CD4-positive, alpha-beta memory T cell (primary cell): ENCODE measurements at regions of chr19 and their contacts with region 1.

Region 1: GRCh38 chr19:14136509-14137281 is at the start of gene ASF1B:
- DNase-seq: peak; percentile 98 to 99 (median 99)
- H3K4me3 ChIP-seq: peak within 1 kb of the TSS; percentile 73 to 77
- H3K4me3 Mint-ChIP-seq: peak within 1 kb of the TSS; percentile 92 to 100 (median 95)
- H3K27ac ChIP-seq: peak within 1 kb of the TSS; percentile 93
- H3K27ac Mint-ChIP-seq: peak within 1 kb of the TSS; percentile 85 to 98 (median 96)
- H3K4me1 ChIP-seq: peaks cover 18% of the 10 kb centered on the region
- H3K4me1 Mint-ChIP-seq: peaks cover 13 to 33% (median 21%) of the 10 kb centered on the region in 4 donors
- H3K27me3 ChIP-seq: no peaks in the 10 kb centered on the region
- H3K27me3 Mint-ChIP-seq: no peaks in the 10 kb centered on the region
- total RNA-seq, gene ASF1B: 2.3 to 3.0 TPM

Region 2: DNA sequence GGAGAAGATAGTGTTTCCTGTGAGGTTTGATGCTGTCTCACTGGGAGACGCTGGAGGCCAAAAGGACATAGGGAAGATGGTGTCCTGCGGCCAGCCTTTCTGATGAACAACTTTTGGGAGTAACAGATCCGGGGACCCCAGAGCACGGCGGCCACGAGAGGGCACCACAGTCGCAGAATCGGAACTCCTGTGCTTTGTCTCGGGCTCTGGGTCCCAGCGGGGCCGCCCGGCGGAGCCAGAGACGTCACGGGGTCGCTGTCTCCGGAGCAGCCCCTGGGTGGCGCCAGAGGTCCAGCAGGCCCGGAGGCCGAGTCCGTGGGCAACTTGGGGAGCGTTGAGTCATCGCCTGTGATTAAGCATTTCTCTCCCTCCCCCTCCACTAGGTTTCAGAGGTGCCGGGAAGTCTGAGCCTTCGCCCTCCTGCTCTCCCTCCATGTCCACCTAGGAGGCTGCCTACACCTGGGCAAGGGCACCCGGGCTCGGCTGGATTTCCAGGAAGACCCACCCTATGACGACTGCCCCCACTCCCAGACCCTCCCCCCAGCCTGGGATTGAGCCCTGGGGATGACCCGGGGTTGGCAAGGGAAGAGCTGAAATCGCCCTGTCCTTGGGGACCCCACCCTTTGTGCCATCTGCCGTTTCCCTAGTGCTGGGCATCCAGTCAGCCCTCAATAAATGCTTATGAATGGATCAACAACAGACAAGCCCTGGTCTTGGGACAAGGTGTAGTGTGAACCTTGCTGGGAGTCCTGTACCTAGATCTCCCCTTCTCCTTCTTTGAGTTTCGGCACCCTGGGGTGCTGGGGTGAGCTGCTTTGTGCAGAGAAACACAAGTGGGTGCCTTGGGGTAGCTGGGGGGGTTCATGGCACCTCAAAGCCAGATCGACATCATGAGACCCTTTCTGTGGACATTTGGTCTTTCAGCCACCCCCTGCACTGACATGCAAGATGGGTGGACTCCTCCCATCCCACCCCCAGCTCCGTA is 256.3 kb before region 1 on chr19:
- CTCF ChIA-PET with region 1: interaction called, 5 read pairs
- POLR2A ChIA-PET with region 1: interaction called, 4 read pairs
- intact Hi-C with region 1: loop called (anchors 1 kb)
- DNase-seq: peak; percentile 95 to 96 (median 96)
- H3K4me3 ChIP-seq: peak overlapping the region in 1 of 2 donors; percentile 25
- H3K4me3 Mint-ChIP-seq: peak overlapping the region; percentile 56 to 85 (median 66)
- H3K27ac ChIP-seq: peak overlapping the region; percentile 64
- H3K27ac Mint-ChIP-seq: peak overlapping the region; percentile 78 to 89 (median 84)
- H3K4me1 ChIP-seq: peaks cover 39% of the 10 kb centered on the region
- H3K4me1 Mint-ChIP-seq: peaks cover 22 to 44% (median 35%) of the 10 kb centered on the region in 4 donors
- H3K27me3 ChIP-seq: no peaks in the 10 kb centered on the region
- H3K27me3 Mint-ChIP-seq: no peaks in the 10 kb centered on the region

Region 3: GRCh38 chr19:14081325-14082093 is 55.2 kb before region 1 on chr19:
- CTCF ChIA-PET with region 1: interaction called, 12 read pairs
- POLR2A ChIA-PET with region 1: interaction called, 17 read pairs
- intact Hi-C with region 1: no loop called
- DNase-seq: peak; percentile 98 to 99 (median 99)
- H3K4me3 ChIP-seq: peak overlapping the region; percentile 61 to 74
- H3K4me3 Mint-ChIP-seq: peak overlapping the region; percentile 87 to 97 (median 92)
- H3K27ac ChIP-seq: peak overlapping the region; percentile 68
- H3K27ac Mint-ChIP-seq: peak overlapping the region; percentile 84 to 98 (median 95)
- H3K4me1 ChIP-seq: peaks cover 18% of the 10 kb centered on the region
- H3K4me1 Mint-ChIP-seq: peaks cover 5 to 28% (median 17%) of the 10 kb centered on the region in 4 donors
- H3K27me3 ChIP-seq: no peaks in the 10 kb centered on the region
- H3K27me3 Mint-ChIP-seq: no peaks in the 10 kb centered on the region

Region 4: DNA sequence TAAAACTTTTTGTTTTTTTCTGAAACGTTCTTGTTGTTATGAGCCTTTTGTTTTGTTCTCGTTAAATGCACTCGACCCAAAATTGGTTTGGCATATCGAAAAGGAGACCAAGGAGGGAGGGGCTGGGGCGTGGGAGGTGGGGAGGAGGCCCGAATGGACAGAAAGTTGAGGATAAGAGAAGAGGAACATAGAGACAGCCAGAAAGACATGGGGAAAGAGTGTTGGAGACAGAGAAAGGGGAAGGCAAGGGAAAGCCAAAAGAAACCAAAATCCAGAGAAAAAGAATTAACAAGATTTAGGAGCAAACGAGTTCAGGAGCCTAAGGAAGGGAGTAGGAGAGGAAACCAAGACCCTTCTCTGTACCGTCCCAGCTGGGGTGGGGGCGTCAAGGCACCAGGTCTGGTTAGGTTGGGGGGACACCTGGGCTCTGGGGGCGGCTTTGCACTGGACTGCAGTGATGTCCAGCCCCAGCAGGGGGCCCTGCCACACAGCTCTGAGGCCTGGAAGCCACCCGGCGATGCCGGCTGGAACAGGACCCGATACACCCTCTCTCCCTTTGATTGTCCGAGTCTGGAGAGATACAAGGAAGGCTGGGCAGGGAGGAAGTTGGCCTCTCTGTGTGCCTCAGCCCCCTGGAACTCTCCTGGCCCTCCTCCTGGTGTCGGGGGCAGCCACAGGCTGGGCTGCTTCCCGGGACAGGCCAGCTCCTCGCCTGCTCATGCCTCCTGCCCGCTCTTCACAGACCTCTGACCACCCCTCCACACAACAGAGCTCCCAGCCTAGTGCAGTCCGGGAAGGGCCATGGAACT is 11.3 kb after region 1 on chr19:
- CTCF ChIA-PET with region 1: interaction called, 29 read pairs
- POLR2A ChIA-PET with region 1: interaction called, 48 read pairs
- intact Hi-C with region 1: loop called (anchors 1 kb)
- DNase-seq: peak in 4 of 5 donors; percentile 35 to 47 (median 41)
- H3K4me3 ChIP-seq: no peak overlapping the region
- H3K4me3 Mint-ChIP-seq: peak overlapping the region in 7 of 8 donors; percentile 51 to 68 (median 62)
- H3K27ac ChIP-seq: peak overlapping the region; percentile 74
- H3K27ac Mint-ChIP-seq: peak overlapping the region; percentile 90 to 99 (median 97)
- H3K4me1 ChIP-seq: peaks cover 36% of the 10 kb centered on the region
- H3K4me1 Mint-ChIP-seq: peaks cover 15 to 43% (median 28%) of the 10 kb centered on the region in 4 donors
- H3K27me3 ChIP-seq: no peaks in the 10 kb centered on the region
- H3K27me3 Mint-ChIP-seq: no peaks in the 10 kb centered on the region

Region 5: DNA sequence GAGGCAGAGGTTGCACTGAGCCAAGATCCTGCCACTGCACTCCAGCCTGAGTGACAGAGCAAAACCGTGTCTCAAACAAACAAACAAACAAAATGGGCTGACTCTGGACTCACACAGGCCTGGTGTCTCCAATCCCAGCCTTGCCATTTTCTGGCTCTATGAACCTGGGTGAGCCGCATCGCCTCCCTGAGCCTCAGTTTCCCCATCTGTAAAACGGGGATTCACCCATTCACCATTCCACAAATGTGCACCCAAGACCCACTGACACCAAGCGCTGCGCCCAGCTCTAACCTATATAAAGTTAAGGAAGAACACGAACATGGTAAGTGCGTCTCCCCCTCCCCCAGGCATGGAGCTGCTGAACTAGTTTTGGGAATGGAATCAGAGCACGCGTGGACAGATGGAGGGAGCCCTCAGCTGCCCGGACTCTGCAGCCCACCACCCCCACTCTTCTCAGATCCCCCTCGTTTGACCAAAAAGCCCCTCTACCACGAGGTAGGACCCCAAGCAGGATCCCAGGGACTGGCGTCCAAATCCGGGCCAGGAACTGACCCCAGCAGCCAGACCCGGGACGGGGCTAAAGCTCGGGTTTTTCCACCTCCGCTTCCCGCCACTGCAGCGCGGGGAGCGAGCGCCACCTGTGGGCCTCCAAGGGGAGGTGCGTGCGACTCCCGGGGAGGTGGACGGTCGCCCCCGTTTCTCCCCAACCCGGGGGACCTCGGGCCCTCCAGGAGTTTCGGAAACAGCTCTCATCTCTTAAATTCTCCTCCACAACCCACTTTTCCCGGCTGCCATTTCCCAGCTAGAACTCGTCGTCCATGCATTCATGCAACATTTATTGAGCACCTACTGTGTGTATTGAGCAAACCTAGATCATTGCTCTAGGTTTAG is 211.5 kb after region 1 on chr19:
- CTCF ChIA-PET with region 1: interaction called, 68 read pairs
- POLR2A ChIA-PET with region 1: interaction called, 36 read pairs
- intact Hi-C with region 1: loop called (anchors 1 kb)
- DNase-seq: peak; percentile 49 to 66 (median 59)
- H3K4me3 ChIP-seq: no peak overlapping the region
- H3K4me3 Mint-ChIP-seq: peak overlapping the region; percentile 48 to 72 (median 68)
- H3K27ac ChIP-seq: no peak overlapping the region
- H3K27ac Mint-ChIP-seq: peak overlapping the region in 3 of 7 donors; percentile 19 to 62 (median 22)
- H3K4me1 ChIP-seq: peaks cover 27% of the 10 kb centered on the region
- H3K4me1 Mint-ChIP-seq: peaks cover 9 to 28% (median 17%) of the 10 kb centered on the region in 4 donors
- H3K27me3 ChIP-seq: no peaks in the 10 kb centered on the region
- H3K27me3 Mint-ChIP-seq: no peaks in the 10 kb centered on the region

Region 6: GRCh38 chr19:14405758-14406644 is 269.3 kb after region 1 on chr19:
- CTCF ChIA-PET with region 1: interaction called, 26 read pairs
- POLR2A ChIA-PET with region 1: interaction called, 24 read pairs
- intact Hi-C with region 1: loop called (anchors 1 kb)
- DNase-seq: peak; percentile 87 to 93 (median 89)
- H3K4me3 ChIP-seq: no peak overlapping the region
- H3K4me3 Mint-ChIP-seq: peak overlapping the region in 2 of 8 donors; percentile 31 to 46
- H3K27ac ChIP-seq: peak overlapping the region; percentile 20
- H3K27ac Mint-ChIP-seq: peak overlapping the region; percentile 72 to 94 (median 81)
- H3K4me1 ChIP-seq: peaks cover 37% of the 10 kb centered on the region
- H3K4me1 Mint-ChIP-seq: peaks cover 14 to 71% (median 25%) of the 10 kb centered on the region in 4 donors
- H3K27me3 ChIP-seq: no peaks in the 10 kb centered on the region
- H3K27me3 Mint-ChIP-seq: no peaks in the 10 kb centered on the region

Region 7: GRCh38 chr19:14505488-14506432 is 369.1 kb after region 1 on chr19:
- CTCF ChIA-PET with region 1: interaction called, 4 read pairs
- POLR2A ChIA-PET with region 1: interaction called, 10 read pairs
- intact Hi-C with region 1: no loop called
- DNase-seq: peak; percentile 61 to 73 (median 69)
- H3K4me3 ChIP-seq: no peak overlapping the region
- H3K4me3 Mint-ChIP-seq: peak overlapping the region in 7 of 8 donors; percentile 33 to 76 (median 68)
- H3K27ac ChIP-seq: peak overlapping the region; percentile 49
- H3K27ac Mint-ChIP-seq: peak overlapping the region; percentile 90 to 99 (median 97)
- H3K4me1 ChIP-seq: peaks cover 46% of the 10 kb centered on the region
- H3K4me1 Mint-ChIP-seq: peaks cover 34 to 74% (median 47%) of the 10 kb centered on the region in 4 donors
- H3K27me3 ChIP-seq: no peaks in the 10 kb centered on the region
- H3K27me3 Mint-ChIP-seq: no peaks in the 10 kb centered on the region

Region 8: GRCh38 chr19:14619404-14619803 is 482.7 kb after region 1 on chr19:
- CTCF ChIA-PET with region 1: no interaction called
- POLR2A ChIA-PET with region 1: no interaction called
- intact Hi-C with region 1: no loop called
- DNase-seq: no peak
- H3K4me3 ChIP-seq: no peak overlapping the region
- H3K4me3 Mint-ChIP-seq: no peak overlapping the region
- H3K27ac ChIP-seq: no peak overlapping the region
- H3K27ac Mint-ChIP-seq: no peak overlapping the region
- H3K4me1 ChIP-seq: no peaks in the 10 kb centered on the region
- H3K4me1 Mint-ChIP-seq: no peaks in the 10 kb centered on the region
- H3K27me3 ChIP-seq: no peaks in the 10 kb centered on the region
- H3K27me3 Mint-ChIP-seq: peaks cover 3 to 4% of the 10 kb centered on the region in 2 donors